Natural killer cell (primary cell): ENCODE measurements at regions of chr19 and their contacts with region 1.

Region 1: GRCh38 chr19:39474139-39474622 is 6.5 kb upstream of the TIMM50 start:
- DNase-seq: peak; percentile 62 to 84
- ATAC-seq: peak; percentile 66 to 76 (median 72)
- H3K4me3 ChIP-seq: no peak overlapping the region
- H3K4me3 Mint-ChIP-seq: no peak overlapping the region
- H3K27ac ChIP-seq: no peak overlapping the region
- H3K27ac Mint-ChIP-seq: peak overlapping the region; percentile 38 to 66
- H3K4me1 ChIP-seq: no peaks in the 10 kb centered on the region
- H3K4me1 Mint-ChIP-seq: peaks cover 8 to 21% of the 10 kb centered on the region in 2 donors
- H3K27me3 ChIP-seq: no peaks in the 10 kb centered on the region
- H3K27me3 Mint-ChIP-seq: no peaks in the 10 kb centered on the region
- CTCF ChIP-seq: peak; percentile 76

Region 2: DNA sequence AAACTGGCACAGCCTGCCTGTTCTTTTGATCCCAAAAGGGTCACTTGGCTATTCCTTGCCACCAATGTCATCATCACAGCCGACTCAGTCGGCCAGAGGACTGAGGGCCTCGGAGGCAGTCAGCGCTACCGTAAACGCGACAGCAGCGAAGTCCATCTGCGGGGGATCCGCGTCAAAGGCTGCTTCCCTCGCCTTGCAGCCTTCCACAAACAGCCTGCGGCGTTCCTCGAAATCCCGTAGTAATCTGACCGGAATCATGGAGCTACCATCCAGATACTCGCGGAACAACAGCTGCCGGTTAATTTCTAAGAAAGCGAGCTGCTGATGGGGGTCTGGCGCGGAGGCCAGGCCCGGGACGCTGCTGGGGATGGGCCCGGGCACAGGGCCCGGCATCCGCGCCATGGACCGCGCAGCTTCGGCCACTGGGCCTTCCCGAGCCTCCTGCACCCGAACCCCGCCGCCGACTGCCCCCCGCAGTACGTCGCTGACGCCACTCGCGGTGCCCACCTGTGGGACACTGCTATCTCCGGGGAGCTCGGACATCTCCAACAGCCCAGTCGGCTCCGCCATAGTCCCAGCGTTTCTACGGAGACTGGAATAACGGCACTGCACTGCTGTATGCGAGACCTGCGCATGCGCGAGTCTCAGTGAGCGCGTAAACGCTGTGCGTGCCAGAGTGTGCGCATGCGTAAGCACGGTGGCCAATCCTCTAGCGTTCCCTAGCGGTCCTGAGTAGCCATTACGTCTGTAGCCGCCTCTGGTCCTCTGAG is 58.2 kb after region 1 on chr19 and contains the start of gene EID2B:
- intact Hi-C with region 1: loop called (anchors 1 kb)
- DNase-seq: peak; percentile 92 to 100
- ATAC-seq: peak; percentile 96 to 99 (median 97)
- H3K4me3 ChIP-seq: peak within 1 kb of the TSS; percentile 70
- H3K4me3 Mint-ChIP-seq: peak within 1 kb of the TSS; percentile 93
- H3K27ac ChIP-seq: peak within 1 kb of the TSS; percentile 73
- H3K27ac Mint-ChIP-seq: peak within 1 kb of the TSS; percentile 79 to 86
- H3K4me1 ChIP-seq: peaks cover 14% of the 10 kb centered on the region
- H3K4me1 Mint-ChIP-seq: peaks cover 8 to 13% of the 10 kb centered on the region in 2 donors
- H3K27me3 ChIP-seq: no peaks in the 10 kb centered on the region
- H3K27me3 Mint-ChIP-seq: no peaks in the 10 kb centered on the region
- CTCF ChIP-seq: peak; percentile 90
- total RNA-seq, gene EID2B: 4.6 to 6.7 (median 5.8) TPM